Lower leg skin (tissue), 4 donors: ENCODE measurements at regions of chr22 and their contacts with region 1.

Region 1: DNA sequence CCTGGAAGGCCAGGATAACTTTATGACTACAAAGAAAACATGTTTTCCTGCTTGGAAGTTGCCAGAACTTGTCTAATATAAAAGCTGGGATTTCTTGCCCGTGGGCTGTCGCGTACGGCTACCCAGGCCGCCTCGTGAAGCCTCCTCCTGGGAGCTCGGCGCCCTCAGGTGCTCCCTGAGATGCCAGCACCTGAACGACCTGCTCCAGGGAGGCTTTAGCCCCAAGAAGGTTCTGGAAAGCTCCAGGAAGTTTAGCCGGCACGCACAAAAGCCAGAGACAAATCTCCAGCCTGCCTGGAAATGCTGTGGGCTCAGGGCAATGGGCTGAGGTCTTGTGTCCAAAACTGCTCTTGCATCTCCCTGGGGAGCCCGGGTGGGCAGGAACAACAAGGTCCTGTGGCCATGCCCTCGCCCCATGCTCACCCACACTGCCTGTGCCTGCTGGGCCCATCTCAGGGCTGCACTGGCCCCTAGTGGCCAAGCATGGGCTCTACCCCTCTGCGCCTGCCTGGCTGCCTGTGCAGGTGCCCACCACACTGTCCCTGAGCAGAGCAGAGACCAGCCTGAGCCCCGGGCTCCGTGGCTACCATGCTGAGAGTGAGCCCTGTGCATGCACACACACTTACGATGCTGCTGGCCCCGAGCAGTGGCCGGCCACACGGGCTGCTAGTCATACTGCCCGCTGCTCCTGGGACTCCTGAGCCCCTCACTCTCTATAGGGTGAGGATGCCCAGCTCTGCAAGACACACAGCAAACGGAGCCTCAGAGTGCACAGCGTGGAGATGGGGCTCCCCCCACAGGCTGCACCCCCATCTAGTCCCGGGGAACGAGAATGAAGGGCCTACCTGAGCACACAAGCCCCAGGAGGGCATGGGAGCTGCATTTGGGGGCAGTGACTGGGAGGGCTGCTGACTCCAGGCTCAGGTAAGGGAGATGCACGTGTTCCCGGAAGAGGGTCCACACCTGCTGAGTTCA is 4.9 kb upstream of the CELSR1 start:
- DNase-seq: peak in 1 of 2 donors; percentile 94
- H3K4me3 ChIP-seq: no peak overlapping the region
- CTCF ChIP-seq: peak in 1 of 3 donors; percentile 80
- POLR2A ChIP-seq: no peak

Region 2: GRCh38 chr22:46367707-46368191 is 174.5 kb before region 1 on chr22:
- intact Hi-C with region 1: loop called (anchors 5 kb)
- DNase-seq: peak in 1 of 2 donors; percentile 92
- H3K4me3 ChIP-seq: no peak overlapping the region
- CTCF ChIP-seq: peak in 1 of 3 donors; percentile 43
- POLR2A ChIP-seq: no peak

Region 3: DNA sequence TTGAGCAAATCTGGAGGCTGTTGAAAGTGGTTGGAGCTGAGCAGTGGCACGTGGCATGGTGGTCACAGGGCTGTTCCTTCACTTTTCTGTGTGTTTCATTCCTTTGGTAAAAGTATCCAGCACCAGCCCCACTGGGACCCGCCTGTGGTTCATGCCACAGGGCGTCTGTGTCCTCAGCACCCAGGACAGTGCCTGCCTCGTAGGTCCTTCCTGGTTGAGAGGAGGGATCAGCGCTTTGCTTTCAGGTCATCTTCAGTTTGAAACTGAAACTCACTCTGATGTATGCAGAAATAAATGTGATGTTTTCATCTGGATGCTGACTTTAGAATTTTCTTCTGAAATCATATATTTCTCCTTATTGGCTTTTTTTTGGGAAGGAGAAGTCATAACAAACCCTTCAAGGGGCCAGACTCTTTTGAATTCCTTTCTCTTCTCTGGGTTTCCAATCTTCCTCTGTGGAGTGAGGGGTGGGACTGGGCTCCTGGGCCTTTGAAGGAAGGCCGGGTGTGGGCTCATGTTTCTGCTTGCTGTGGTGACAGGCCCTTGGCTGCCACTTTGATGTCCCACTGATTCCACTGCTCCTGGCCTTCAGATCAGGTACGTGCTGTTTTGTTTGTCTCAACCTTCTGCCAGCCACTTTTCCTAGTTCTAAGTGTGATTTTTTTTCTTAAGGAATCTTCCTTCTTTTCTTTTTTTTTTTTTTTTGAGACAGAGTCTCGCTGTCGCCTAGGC is 246.3 kb after region 1 on chr22:
- intact Hi-C with region 1: no loop called
- DNase-seq: no peak
- H3K4me3 ChIP-seq: no peak overlapping the region
- CTCF ChIP-seq: no peak
- POLR2A ChIP-seq: no peak